ENCODE measurements at regions of chr1 and their contacts with region 1.

Region 1: GRCh38 chr1:234188454-234188792 is 184.8 kb upstream of the COA6 start:
- DNase-seq: peak; percentile 22
- ATAC-seq: no peak
- H3K4me3 ChIP-seq: no peak overlapping the region
- H3K27ac ChIP-seq: no peak overlapping the region
- H3K4me1 ChIP-seq: peaks cover 25% of the 10 kb centered on the region
- H3K27me3 ChIP-seq: no peaks in the 10 kb centered on the region
- CTCF ChIP-seq: peak; percentile 68

Region 2: DNA sequence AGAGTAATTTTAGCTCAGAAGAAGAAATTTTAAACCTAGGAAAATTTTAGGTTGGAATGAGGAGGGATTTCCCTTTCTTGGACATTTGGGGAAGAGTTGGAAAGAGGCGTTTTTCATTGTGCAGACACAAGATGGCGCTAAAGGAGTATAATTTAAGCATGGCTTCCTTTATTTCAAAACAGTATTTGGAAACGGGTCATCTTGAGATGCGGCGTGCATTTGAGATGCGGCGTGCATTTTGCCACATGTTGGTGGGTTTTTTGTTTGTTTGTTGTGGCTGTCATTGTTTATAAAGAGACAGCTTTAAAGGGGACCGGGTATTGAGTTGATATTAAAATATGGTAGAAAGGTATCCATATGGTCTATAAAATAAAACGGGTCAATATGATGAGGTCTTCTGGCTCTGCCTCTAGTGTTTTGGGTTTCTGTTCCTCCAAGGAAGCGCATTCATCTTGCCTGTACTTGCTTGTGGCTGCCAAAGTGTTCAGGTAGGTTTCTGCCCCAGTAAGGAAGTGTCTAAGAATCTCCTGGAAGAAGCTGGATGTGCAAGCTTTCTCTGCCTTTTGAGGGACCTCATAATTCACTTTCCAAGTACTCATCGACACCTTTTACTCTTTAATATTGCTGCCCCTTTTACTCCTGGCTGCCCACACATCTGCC is 73.6 kb before region 1 on chr1:
- CTCF ChIA-PET with region 1: no interaction called
- POLR2A ChIA-PET with region 1: no interaction called
- intact Hi-C with region 1: loop called (anchors 2 kb)
- DNase-seq: peak; percentile 85
- ATAC-seq: peak; percentile 65
- H3K4me3 ChIP-seq: peak overlapping the region; percentile 60
- H3K27ac ChIP-seq: no peak overlapping the region
- H3K4me1 ChIP-seq: peaks cover 2% of the 10 kb centered on the region
- H3K27me3 ChIP-seq: no peaks in the 10 kb centered on the region
- CTCF ChIP-seq: peak; percentile 92

Region 3: GRCh38 chr1:234139966-234140365 is 48.5 kb before region 1 on chr1:
- CTCF ChIA-PET with region 1: no interaction called
- POLR2A ChIA-PET with region 1: no interaction called
- intact Hi-C with region 1: no loop called
- DNase-seq: peak; percentile 99
- ATAC-seq: peak; percentile 100
- H3K4me3 ChIP-seq: no peak overlapping the region
- H3K27ac ChIP-seq: peak overlapping the region; percentile 94
- H3K4me1 ChIP-seq: peaks cover 18% of the 10 kb centered on the region
- H3K27me3 ChIP-seq: no peaks in the 10 kb centered on the region
- CTCF ChIP-seq: no peak

Region 4: GRCh38 chr1:234154320-234155251 is 33.8 kb before region 1 on chr1:
- CTCF ChIA-PET with region 1: no interaction called
- POLR2A ChIA-PET with region 1: no interaction called
- intact Hi-C with region 1: no loop called
- DNase-seq: peak; percentile 92
- ATAC-seq: peak; percentile 88
- H3K4me3 ChIP-seq: no peak overlapping the region
- H3K27ac ChIP-seq: no peak overlapping the region
- H3K4me1 ChIP-seq: no peaks in the 10 kb centered on the region
- H3K27me3 ChIP-seq: no peaks in the 10 kb centered on the region
- CTCF ChIP-seq: peak; percentile 92

Region 5: GRCh38 chr1:234206651-234207284 is 18.3 kb after region 1 on chr1:
- CTCF ChIA-PET with region 1: no interaction called
- POLR2A ChIA-PET with region 1: no interaction called
- intact Hi-C with region 1: loop called (anchors 2 kb)
- DNase-seq: peak; percentile 99
- ATAC-seq: peak; percentile 98
- H3K4me3 ChIP-seq: no peak overlapping the region
- H3K27ac ChIP-seq: peak overlapping the region; percentile 35
- H3K4me1 ChIP-seq: peaks cover 22% of the 10 kb centered on the region
- H3K27me3 ChIP-seq: no peaks in the 10 kb centered on the region
- CTCF ChIP-seq: no peak

Region 6: DNA sequence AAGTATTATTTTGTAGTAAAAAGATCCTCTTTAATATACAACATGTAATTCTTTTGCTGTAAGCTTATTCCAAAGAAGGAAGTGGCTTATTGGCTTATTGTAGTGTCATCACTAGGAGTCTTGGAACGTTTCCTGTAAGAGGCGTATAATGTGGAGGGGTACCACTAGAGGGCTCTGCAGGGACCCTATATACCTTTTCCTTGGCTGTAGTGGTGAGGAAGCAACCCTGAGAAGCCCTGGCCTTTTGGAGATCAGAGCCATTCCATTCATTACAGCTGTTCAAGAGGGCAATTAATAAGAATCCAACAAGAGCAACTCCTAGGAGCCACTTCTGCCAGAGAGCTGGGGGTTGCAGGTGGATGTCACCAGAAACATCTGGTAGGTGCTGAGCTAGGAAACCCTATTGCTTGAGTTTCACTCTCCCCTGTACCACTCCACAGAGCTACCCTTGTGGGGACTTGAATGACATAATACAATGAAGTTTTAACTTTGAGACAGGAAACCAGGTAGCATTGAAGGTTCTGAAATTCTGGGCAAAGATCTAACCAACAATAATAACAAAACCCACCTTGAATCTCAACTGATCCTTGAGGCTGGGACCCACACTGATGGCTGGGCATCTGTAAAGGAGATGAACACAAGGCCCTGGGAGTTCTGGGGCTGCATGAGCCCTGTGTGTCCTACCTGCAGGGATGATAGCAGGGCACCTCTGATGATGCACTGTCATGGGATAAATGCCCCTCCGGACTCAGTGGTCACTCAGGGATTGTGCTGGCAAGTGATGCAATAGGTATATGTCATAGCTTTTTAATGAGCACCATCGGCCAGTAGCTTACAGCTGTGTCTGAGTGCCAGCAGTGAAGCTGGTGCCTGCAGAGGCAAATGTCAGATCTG is 24.6 kb after region 1 on chr1:
- CTCF ChIA-PET with region 1: no interaction called
- POLR2A ChIA-PET with region 1: no interaction called
- intact Hi-C with region 1: loop called (anchors 1 kb)
- DNase-seq: peak; percentile 73
- ATAC-seq: peak; percentile 23
- H3K4me3 ChIP-seq: no peak overlapping the region; the same call in 1 of the 2 replicates
- H3K27ac ChIP-seq: no peak overlapping the region
- H3K4me1 ChIP-seq: peaks cover 23% of the 10 kb centered on the region
- H3K27me3 ChIP-seq: no peaks in the 10 kb centered on the region
- CTCF ChIP-seq: peak; percentile 76

Region 7: DNA sequence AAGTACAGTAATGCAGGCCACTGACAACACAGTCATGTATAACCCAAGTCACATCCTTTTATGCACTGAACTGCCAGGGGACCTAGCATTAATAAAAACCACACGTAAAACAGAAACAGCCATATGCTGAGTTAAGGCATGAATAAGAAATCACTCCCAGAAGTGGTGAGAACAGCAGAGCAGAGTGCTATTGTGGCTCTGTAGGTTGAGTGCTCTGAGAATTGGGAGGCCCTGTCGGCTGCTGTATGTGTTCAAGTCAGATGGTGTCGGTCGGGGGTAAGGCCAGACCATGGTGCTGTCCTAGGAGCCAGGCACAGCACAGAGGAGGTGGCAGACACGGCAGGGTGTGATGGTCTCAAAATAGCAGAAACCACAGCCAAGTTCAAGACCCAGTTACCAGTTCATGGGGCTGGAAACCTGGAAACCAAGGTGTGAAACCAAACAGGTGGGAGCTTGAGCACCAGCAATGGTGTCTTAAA is 58.3 kb after region 1 on chr1:
- CTCF ChIA-PET with region 1: no interaction called
- POLR2A ChIA-PET with region 1: no interaction called
- intact Hi-C with region 1: no loop called
- DNase-seq: no peak
- ATAC-seq: no peak
- H3K4me3 ChIP-seq: no peak overlapping the region
- H3K27ac ChIP-seq: no peak overlapping the region
- H3K4me1 ChIP-seq: no peaks in the 10 kb centered on the region
- H3K27me3 ChIP-seq: no peaks in the 10 kb centered on the region
- CTCF ChIP-seq: no peak

Measured in PC-3 (cell line).